ENCODE measurements at regions of chr16 and their contacts with region 1.

Region 1: DNA sequence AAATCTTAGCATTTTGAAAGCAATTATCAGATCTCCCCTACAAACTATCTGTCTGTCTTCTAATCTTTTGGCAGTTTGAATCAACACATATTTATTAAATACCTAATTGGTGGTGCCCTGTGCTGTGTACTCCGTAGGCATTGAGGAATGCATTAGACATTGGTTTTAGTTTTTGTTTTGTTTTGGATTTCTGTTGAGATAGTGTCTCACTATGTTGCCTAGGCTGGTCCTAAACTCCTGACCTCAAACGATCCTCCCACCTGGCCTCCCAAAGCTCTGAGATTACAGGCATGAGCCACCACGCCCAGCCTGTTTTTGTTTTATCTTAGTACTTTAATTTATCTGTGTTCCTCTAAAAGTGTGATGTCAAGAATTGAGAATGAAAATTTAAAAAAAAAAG is 124.8 kb upstream of the RBL2 start:
- DNase-seq: no peak
- H3K4me3 ChIP-seq: no peak overlapping the region
- H3K27ac ChIP-seq: no peak overlapping the region
- H3K4me1 ChIP-seq: no peaks in the 10 kb centered on the region
- H3K27me3 ChIP-seq: no peaks in the 10 kb centered on the region
- CTCF ChIP-seq: no peak
- POLR2A ChIP-seq: no peak

Region 2: GRCh38 chr16:53232826-53233529 is 76.5 kb before region 1 on chr16:
- intact Hi-C with region 1: loop called in 1 of 2 experiments (anchors 5 kb)
- DNase-seq: no peak
- H3K4me3 ChIP-seq: no peak overlapping the region
- H3K27ac ChIP-seq: no peak overlapping the region
- H3K4me1 ChIP-seq: peaks cover 0 to 7% of the 10 kb centered on the region in 2 donors
- H3K27me3 ChIP-seq: no peaks in the 10 kb centered on the region
- CTCF ChIP-seq: no peak
- POLR2A ChIP-seq: no peak

Region 3: GRCh38 chr16:53249331-53249730 is 60.1 kb before region 1 on chr16:
- intact Hi-C with region 1: no loop called
- DNase-seq: no peak
- H3K4me3 ChIP-seq: no peak overlapping the region
- H3K27ac ChIP-seq: no peak overlapping the region
- H3K4me1 ChIP-seq: no peaks in the 10 kb centered on the region
- H3K27me3 ChIP-seq: no peaks in the 10 kb centered on the region
- CTCF ChIP-seq: no peak
- POLR2A ChIP-seq: no peak

Region 4: GRCh38 chr16:53404959-53405358 is 95.5 kb after region 1 on chr16:
- intact Hi-C with region 1: no loop called
- DNase-seq: no peak
- H3K4me3 ChIP-seq: no peak overlapping the region
- H3K27ac ChIP-seq: no peak overlapping the region
- H3K4me1 ChIP-seq: no peaks in the 10 kb centered on the region
- H3K27me3 ChIP-seq: no peaks in the 10 kb centered on the region
- CTCF ChIP-seq: no peak
- POLR2A ChIP-seq: no peak

Region 5: DNA sequence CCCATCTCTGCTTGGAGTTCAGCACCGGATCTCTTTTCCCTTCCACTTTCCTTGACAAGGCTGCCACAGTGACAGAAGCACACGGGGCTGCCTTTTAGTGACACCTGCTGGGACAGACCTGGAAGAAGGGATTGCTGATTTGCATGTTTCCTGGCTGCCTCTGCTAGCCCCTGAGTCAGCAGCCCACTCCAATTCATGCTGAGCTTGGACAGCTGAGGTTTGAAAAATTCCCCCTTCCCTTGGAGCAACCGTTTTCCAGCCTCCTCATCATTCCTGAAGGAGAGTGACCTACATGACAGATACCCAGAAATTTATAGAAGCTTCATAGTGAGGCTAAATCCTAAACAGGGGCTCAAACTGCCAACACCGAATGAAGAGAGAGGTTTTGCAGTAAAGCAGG is 106.0 kb after region 1 on chr16:
- intact Hi-C with region 1: no loop called
- DNase-seq: no peak
- H3K4me3 ChIP-seq: no peak overlapping the region
- H3K27ac ChIP-seq: no peak overlapping the region
- H3K4me1 ChIP-seq: no peaks in the 10 kb centered on the region
- H3K27me3 ChIP-seq: no peaks in the 10 kb centered on the region
- CTCF ChIP-seq: no peak
- POLR2A ChIP-seq: no peak